ENCODE measurements at regions of chr10 and their contacts with region 1.

Region 1: DNA sequence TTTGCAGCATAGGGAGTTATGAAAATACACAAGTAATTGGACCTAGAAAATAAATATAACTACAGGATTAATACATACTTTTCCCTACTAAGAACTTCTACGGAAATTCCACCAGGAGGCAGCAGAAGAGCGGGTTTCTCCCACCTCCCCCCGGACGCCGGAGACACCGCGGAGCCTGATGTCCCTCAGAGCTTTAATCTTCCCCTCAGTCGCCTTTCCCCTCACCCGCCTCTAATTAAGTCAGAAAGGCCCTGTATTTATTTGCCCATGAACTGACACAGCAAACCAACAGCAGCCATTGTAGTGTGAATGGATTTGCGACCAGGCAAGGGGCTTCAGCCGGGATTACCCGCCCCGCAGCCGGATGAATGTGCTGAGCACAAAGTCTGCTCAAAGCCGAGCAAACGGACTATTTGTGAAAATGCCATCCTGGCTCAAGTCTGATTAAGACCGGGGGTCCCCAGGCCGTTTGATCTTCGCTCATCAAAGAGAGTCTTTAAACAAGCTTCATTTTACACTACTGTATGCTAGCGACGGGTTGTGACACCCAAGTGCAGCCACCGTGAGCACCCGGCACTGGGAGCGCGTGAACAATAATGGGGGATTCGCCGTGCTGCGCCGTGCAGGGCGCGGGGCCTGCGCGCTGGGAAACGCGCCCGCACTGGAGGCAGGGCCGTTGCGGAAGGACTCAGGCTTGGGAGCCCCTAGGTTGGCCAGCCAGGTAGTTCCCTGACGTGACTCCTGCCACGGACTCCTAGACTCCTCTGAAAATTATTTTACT is 5.6 kb upstream of the DKK1 start:
- DNase-seq: peak; percentile 67
- H3K4me3 Mint-ChIP-seq: peak overlapping the region; percentile 65
- H3K27ac Mint-ChIP-seq: peak overlapping the region; percentile 43
- H3K4me1 Mint-ChIP-seq: peaks cover 12% of the 10 kb centered on the region
- H3K27me3 Mint-ChIP-seq: no peaks in the 10 kb centered on the region
- CTCF ChIP-seq: peak; percentile 78

Region 2: GRCh38 chr10:52210161-52210560 is 98.3 kb before region 1 on chr10:
- CTCF ChIA-PET with region 1: no interaction called
- POLR2A ChIA-PET with region 1: no interaction called
- intact Hi-C with region 1: no loop called
- DNase-seq: no peak
- H3K4me3 Mint-ChIP-seq: no peak overlapping the region
- H3K27ac Mint-ChIP-seq: no peak overlapping the region
- H3K4me1 Mint-ChIP-seq: no peaks in the 10 kb centered on the region
- H3K27me3 Mint-ChIP-seq: peaks cover 30% of the 10 kb centered on the region
- CTCF ChIP-seq: no peak

Region 3: GRCh38 chr10:52451817-52452216 is 143.4 kb after region 1 on chr10:
- CTCF ChIA-PET with region 1: interaction called, 13 read pairs
- POLR2A ChIA-PET with region 1: interaction called, 3 read pairs
- intact Hi-C with region 1: no loop called
- DNase-seq: peak; percentile 88
- H3K4me3 Mint-ChIP-seq: no peak overlapping the region
- H3K27ac Mint-ChIP-seq: no peak overlapping the region
- H3K4me1 Mint-ChIP-seq: peaks cover 28% of the 10 kb centered on the region
- H3K27me3 Mint-ChIP-seq: no peaks in the 10 kb centered on the region
- CTCF ChIP-seq: no peak

Region 4: DNA sequence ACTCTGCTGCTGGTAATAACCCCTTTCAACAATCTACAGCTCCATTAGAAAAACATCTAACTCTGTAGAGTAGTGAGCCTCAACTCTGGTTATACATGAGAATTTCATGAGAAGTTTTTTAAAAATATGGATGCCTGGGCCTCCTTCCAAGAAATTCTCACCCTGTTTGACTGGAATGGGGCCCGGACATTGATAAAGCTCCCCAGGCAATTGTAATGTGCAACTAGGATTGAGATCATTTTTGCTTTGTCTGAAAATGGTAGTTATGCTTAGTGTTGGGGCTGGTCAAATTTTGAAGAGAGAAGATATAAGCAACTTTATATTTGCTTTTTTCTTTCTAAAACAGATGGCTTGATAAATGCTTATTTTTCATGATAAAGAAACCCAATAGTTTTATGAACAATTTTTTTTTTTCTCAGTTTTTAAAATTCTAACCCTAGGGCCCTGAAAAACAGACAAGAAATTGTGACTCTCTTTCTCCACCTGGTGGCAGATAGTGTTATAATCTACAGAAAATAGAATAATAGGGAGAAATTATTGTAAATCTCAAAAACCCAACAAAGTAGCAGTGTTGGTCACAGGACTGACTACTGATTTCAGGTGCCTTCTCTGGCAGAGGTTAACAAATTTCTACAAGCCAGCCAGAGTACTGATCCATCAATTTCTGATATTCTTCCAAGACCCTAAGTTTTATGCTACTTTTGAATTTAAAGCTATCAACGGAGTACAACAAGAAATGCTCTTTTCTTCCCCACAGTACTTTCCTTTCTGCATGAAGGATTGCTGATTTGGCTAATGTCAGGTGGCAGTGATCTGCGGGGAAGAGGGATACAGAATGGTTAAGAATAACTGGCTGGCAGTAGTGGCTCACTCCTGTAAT is 180.4 kb after region 1 on chr10:
- CTCF ChIA-PET with region 1: interaction called, 389 read pairs
- POLR2A ChIA-PET with region 1: interaction called, 86 read pairs
- intact Hi-C with region 1: no loop called
- DNase-seq: peak; percentile 71
- H3K4me3 Mint-ChIP-seq: no peak overlapping the region
- H3K27ac Mint-ChIP-seq: peak overlapping the region; percentile 88
- H3K4me1 Mint-ChIP-seq: peaks cover 15% of the 10 kb centered on the region
- H3K27me3 Mint-ChIP-seq: no peaks in the 10 kb centered on the region
- CTCF ChIP-seq: peak; percentile 53

Region 5: DNA sequence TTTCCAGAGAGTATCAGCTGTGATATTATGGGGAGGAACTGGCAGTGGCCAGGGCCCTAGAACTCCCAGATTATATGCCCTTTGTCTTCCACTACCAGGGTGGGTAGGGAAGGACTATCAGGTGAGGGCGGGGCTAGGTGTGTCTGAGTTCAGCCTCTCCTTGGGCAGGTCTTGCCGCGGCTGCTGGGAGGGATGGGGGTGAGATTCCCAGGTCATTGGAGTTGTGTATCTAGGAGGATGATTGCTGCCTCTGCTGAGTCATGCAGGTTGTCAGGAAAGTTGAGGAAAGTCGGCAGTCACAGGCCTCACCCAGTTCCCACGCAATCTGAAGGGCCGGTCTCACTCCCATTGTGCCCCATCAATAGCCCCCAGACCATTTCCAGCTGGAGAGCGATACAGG is 190.8 kb after region 1 on chr10:
- CTCF ChIA-PET with region 1: interaction called, 389 read pairs
- POLR2A ChIA-PET with region 1: no interaction called
- intact Hi-C with region 1: no loop called
- DNase-seq: peak; percentile 37
- H3K4me3 Mint-ChIP-seq: no peak overlapping the region
- H3K27ac Mint-ChIP-seq: peak overlapping the region; percentile 30
- H3K4me1 Mint-ChIP-seq: no peaks in the 10 kb centered on the region
- H3K27me3 Mint-ChIP-seq: no peaks in the 10 kb centered on the region
- CTCF ChIP-seq: no peak

Region 6: DNA sequence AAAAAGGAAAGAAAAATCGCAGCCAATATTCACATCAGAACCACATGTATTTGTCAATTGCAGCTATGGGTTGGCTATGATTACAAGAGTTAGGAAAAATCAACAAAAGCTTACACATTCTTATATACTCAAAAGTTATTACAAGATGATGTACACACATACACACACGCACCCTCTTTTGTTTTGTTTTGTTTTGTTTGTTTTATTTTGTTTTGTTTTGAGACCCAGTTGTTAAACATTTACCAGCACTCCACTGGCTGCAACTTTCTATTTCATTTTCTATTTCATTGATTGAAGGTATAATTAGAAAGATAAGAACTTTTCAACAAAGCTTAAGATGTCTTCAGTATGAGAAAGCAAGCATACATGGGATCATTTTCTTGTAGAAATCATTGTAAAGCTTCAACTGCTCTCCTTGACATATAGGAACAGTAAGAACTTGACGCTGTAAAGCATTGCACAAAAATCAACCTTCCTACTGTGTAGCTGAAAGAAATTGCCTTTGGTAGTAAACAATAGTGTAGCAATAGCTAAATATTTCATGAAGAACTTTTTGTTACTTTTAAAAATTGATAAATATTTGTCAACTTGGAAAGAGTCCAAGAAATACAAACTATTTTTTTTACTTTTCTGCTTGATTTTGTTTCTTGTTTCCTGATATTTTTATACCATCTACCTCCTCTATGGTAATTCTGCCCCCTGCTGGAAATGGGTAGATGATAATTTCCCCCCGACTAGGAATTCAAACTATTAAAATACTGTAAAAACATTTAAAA is 258.2 kb after region 1 on chr10:
- CTCF ChIA-PET with region 1: interaction called, 87 read pairs
- POLR2A ChIA-PET with region 1: interaction called, 9 read pairs
- intact Hi-C with region 1: loop called (anchors 1 kb)
- DNase-seq: peak; percentile 77
- H3K4me3 Mint-ChIP-seq: no peak overlapping the region
- H3K27ac Mint-ChIP-seq: peak overlapping the region; percentile 14
- H3K4me1 Mint-ChIP-seq: peaks cover 20% of the 10 kb centered on the region
- H3K27me3 Mint-ChIP-seq: no peaks in the 10 kb centered on the region
- CTCF ChIP-seq: peak; percentile 51

Region 7: GRCh38 chr10:52729271-52730104 is 421.0 kb after region 1 on chr10:
- CTCF ChIA-PET with region 1: interaction called, 6 read pairs
- POLR2A ChIA-PET with region 1: no interaction called
- intact Hi-C with region 1: loop called (anchors 1 kb)
- DNase-seq: peak; percentile 50
- H3K4me3 Mint-ChIP-seq: no peak overlapping the region
- H3K27ac Mint-ChIP-seq: no peak overlapping the region
- H3K4me1 Mint-ChIP-seq: no peaks in the 10 kb centered on the region
- H3K27me3 Mint-ChIP-seq: no peaks in the 10 kb centered on the region
- CTCF ChIP-seq: peak; percentile 58

Region 8: DNA sequence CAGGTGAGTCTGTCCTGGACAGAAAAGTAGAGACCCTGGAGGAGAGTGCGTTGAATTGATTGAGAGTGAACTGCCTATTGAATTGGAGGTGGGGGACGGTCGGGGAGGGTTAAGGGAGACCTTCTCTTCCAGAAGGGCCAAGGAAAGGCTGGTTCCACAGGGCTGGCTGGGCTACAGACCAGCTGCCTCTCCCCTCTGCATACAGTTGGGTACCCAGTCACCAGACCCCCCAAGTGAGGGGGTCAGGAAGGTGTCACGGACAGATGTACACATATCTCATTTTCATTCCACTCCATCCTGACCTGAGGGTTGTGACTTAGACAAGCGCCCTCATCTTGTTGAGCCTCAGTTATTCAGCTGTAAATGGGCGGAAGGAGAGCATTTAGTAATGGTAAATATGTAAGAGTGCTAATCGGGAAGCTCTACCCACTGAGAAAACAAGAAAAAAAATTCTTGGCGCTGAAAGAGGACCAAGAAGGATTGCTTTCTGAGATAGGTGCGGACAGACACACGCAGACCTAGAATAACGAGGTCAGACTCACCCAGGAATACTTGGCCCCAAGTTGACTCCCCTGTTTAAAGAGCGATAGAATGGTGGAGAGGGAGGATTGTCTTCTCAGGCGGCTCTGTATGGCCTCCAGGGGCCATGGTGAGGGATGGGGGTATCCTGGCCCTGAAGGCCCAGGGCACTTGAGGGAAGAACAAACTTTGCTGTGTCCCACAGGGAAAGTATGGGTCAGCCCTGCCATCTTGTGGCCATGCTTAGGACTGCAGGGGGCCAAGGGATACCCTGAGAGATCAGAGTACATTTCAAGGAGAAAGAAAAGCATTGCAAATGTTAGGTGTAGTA is 471.3 kb after region 1 on chr10:
- CTCF ChIA-PET with region 1: no interaction called
- POLR2A ChIA-PET with region 1: no interaction called
- intact Hi-C with region 1: loop called (anchors 1 kb)
- DNase-seq: peak; percentile 70
- H3K4me3 Mint-ChIP-seq: no peak overlapping the region
- H3K27ac Mint-ChIP-seq: no peak overlapping the region
- H3K4me1 Mint-ChIP-seq: no peaks in the 10 kb centered on the region
- H3K27me3 Mint-ChIP-seq: no peaks in the 10 kb centered on the region
- CTCF ChIP-seq: peak; percentile 95